Heart right ventricle (tissue), 16 donors: ENCODE measurements at regions of chr1 and their contacts with region 1.

Region 1: GRCh38 chr1:93629099-93630059 is 52.3 kb downstream of the BCAR3 start:
- DNase-seq: peak in 1 of 2 donors; percentile 58
- ATAC-seq: peak; percentile 55 to 77 (median 64)
- H3K4me3 ChIP-seq: no peak overlapping the region
- H3K27ac ChIP-seq: no peak overlapping the region
- H3K4me1 ChIP-seq: peaks cover 7 to 36% (median 23%) of the 10 kb centered on the region in 9 donors
- H3K27me3 ChIP-seq: no peaks in the 10 kb centered on the region
- CTCF ChIP-seq: peak; percentile 60 to 93 (median 80)

Region 2: DNA sequence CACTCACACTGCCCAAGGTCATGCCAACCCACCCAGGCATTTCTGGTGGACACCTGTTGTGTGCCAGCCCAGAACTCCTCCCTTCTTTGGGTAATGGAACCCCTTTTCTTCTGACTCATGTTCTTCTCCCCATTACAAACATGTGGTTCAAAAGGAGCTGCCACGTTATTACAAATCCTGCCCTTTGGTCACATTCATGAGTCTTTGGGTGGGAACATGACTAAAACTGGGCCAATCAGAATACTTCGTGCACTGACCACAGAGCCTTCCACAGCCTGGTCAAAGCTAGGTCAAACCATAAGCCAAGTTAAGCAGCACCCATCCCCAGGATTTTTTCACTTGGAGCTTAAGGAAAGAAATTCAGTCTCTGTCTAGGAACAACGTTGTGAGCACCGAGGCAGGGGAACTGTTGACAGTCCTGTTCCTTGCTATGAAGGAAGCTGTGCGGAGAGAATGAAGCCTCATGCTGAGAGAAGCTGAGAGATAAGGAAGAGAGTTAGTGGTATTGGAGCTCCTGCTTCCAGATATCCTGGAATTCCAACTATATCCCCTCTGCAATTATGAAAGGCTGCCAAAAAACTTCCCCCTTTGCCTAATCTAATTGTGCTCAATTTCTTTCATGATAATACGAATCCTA is 621.3 kb before region 1 on chr1:
- intact Hi-C with region 1: no loop called
- DNase-seq: no peak
- ATAC-seq: no peak
- H3K4me3 ChIP-seq: no peak overlapping the region
- H3K27ac ChIP-seq: no peak overlapping the region
- H3K4me1 ChIP-seq: peaks cover 0 to under 1% (median 0%) of the 10 kb centered on the region in 9 donors
- H3K27me3 ChIP-seq: peaks cover 0 to 13% (median 5%) of the 10 kb centered on the region in 7 donors
- CTCF ChIP-seq: no peak

Region 3: DNA sequence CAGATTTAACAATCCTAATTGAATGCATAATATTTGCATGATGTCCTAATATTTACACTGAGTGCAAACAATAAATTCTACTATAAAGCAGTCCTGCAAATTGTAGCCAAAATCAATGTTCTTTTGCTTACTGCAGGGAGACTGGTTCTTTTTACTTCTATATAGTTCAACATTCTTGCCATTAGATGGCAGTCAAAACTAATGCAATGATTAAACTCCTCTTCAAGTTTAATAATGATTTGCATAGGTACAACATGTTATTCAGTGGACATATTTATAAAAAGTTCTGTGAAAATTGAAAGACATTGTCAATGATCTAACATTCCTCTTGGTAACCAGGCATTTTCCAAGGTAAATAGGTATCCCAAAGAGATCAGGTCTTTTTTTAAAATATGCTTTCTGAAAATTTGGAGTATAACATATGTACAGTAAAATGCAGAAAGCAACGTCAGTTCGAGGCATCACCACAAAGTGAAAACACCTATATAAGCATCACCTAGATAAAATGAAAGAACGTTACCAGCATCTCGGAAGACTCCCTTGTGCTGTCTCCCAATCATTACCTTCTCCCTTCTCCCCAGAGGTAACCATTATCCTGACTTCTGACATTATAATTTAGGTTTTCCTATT is 191.3 kb before region 1 on chr1:
- intact Hi-C with region 1: loop called in 7 of 10 experiments (anchors 2 to 10 kb)
- DNase-seq: no peak
- ATAC-seq: peak in 5 of 8 donors; percentile 61 to 79 (median 68)
- H3K4me3 ChIP-seq: no peak overlapping the region
- H3K27ac ChIP-seq: no peak overlapping the region
- H3K4me1 ChIP-seq: peaks cover 0 to 3% (median 0%) of the 10 kb centered on the region in 9 donors
- H3K27me3 ChIP-seq: peaks cover 0 to 6% (median 0%) of the 10 kb centered on the region in 7 donors
- CTCF ChIP-seq: peak; percentile 37 to 83 (median 71)

Region 4: DNA sequence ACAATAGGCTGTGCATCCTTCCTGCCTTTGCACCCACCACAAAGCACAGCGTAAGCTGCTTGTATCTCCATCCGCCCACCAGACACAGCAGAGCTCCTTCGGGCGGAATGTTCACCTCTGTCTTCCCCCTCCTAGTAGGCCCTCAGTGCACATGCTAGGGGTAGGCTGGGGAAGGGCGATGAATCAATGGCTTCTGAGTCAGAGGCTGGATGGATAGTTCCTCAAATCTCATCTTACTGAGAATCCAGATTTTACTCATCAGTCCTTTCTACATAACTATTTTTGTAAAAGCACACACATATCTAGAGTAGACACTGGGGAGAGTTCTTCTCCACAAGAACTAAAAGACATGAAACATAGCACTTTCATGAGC is 21.6 kb before region 1 on chr1:
- intact Hi-C with region 1: no loop called
- DNase-seq: no peak
- ATAC-seq: peak in 5 of 8 donors; percentile 4 to 32 (median 18)
- H3K4me3 ChIP-seq: no peak overlapping the region
- H3K27ac ChIP-seq: peak overlapping the region; percentile 11 to 82 (median 62)
- H3K4me1 ChIP-seq: peaks cover 28 to 99% (median 63%) of the 10 kb centered on the region in 9 donors
- H3K27me3 ChIP-seq: no peaks in the 10 kb centered on the region
- CTCF ChIP-seq: no peak

Region 5: DNA sequence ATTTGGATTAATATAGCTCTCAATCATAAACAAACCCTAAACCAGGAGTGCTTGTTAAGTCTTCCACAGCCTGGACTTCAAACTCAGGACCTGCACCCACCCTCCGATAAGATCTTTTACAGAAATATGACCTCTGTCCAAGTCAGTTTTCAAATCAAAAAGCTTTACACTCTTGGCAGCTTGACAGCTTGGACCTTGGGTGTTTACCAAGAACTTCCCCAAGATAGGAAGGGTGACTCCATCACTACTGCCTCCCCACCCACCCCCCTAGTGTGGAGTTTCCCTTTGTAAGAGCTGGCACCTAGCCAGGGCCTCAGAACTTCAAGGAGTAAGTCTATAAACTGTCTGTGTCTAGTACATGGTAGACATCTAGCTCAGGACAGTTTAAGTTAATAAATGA is 42.7 kb after region 1 on chr1:
- intact Hi-C with region 1: loop called in 3 of 10 experiments (anchors 2 to 5 kb)
- DNase-seq: peak; percentile 61 to 88
- ATAC-seq: peak; percentile 44 to 80 (median 66)
- H3K4me3 ChIP-seq: peak overlapping the region in 1 of 10 donors; percentile 3
- H3K27ac ChIP-seq: peak overlapping the region in 9 of 10 donors; percentile 21 to 78 (median 55)
- H3K4me1 ChIP-seq: peaks cover 39 to 100% (median 93%) of the 10 kb centered on the region in 9 donors
- H3K27me3 ChIP-seq: no peaks in the 10 kb centered on the region
- CTCF ChIP-seq: no peak

Region 6: GRCh38 chr1:93722081-93723031 is 93.0 kb after region 1 on chr1:
- intact Hi-C with region 1: loop called in 3 of 10 experiments (anchors 5 to 10 kb)
- DNase-seq: peak; percentile 76 to 80
- ATAC-seq: peak; percentile 76 to 94 (median 90)
- H3K4me3 ChIP-seq: no peak overlapping the region
- H3K27ac ChIP-seq: peak overlapping the region; percentile 58 to 93 (median 88)
- H3K4me1 ChIP-seq: peaks cover 25 to 60% (median 33%) of the 10 kb centered on the region in 9 donors
- H3K27me3 ChIP-seq: no peaks in the 10 kb centered on the region
- CTCF ChIP-seq: peak in 7 of 9 donors; percentile 16 to 58 (median 36)

Region 7: GRCh38 chr1:93814059-93814794 is 184.8 kb after region 1 on chr1:
- intact Hi-C with region 1: loop called (anchors 1 to 5 kb)
- DNase-seq: peak in 1 of 2 donors; percentile 75
- ATAC-seq: peak; percentile 69 to 87 (median 78)
- H3K4me3 ChIP-seq: no peak overlapping the region
- H3K27ac ChIP-seq: no peak overlapping the region
- H3K4me1 ChIP-seq: peaks cover 2 to 57% (median 45%) of the 10 kb centered on the region in 9 donors
- H3K27me3 ChIP-seq: no peaks in the 10 kb centered on the region
- CTCF ChIP-seq: peak; percentile 96 to 100 (median 98)